ENCODE measurements at regions of chr6 and their contacts with region 1.

Region 1: DNA sequence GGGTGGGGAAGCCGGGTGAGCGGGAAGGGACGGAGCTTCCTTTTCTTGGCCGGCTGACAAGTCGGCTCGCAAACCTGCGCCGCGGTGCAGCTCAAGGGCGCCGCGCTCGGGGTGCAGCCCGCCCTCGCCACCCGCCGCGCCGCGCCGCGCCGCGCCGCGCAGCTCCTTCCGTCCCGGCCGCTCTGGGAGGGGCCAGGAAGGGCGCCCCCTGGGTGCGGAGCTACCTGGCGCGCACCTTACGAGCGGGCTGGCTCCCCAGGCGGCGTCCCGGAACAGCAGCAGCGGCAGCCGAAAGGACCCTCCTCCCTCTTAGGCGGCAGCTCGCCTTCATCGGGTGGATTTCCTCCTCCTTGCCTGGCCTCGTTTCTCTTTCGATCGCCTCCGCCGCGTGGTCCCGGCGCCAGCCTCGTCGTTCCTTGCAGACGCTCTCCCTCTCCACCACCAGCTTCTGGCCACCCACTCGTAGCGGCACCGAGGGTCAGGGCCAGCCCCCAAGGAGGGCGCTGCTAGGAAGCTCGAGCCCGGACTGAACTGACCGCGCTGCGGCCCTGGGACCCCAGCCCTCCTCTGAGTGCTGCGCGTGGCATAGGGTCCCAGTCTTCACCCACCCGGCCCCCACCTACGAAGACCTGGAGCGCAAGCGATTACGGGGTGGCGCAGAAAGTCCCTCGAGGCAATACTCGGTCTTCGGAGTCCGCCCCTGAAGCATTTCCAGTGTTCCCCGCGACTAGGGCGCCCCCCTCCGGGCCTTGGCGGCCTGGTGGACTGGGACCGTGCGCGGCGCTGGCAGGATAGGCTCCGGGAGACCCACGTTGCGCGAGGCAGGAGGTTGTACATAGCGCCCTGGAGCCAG is at the start of gene MAP3K5:
- DNase-seq: peak; percentile 94
- H3K4me3 Mint-ChIP-seq: peak within 1 kb of the TSS; percentile 87
- H3K27ac Mint-ChIP-seq: peak within 1 kb of the TSS; percentile 96
- H3K4me1 Mint-ChIP-seq: peaks cover 33% of the 10 kb centered on the region
- H3K27me3 Mint-ChIP-seq: peaks cover 2% of the 10 kb centered on the region
- total RNA-seq, gene MAP3K5: 23.4 to 24.0 TPM

Region 2: DNA sequence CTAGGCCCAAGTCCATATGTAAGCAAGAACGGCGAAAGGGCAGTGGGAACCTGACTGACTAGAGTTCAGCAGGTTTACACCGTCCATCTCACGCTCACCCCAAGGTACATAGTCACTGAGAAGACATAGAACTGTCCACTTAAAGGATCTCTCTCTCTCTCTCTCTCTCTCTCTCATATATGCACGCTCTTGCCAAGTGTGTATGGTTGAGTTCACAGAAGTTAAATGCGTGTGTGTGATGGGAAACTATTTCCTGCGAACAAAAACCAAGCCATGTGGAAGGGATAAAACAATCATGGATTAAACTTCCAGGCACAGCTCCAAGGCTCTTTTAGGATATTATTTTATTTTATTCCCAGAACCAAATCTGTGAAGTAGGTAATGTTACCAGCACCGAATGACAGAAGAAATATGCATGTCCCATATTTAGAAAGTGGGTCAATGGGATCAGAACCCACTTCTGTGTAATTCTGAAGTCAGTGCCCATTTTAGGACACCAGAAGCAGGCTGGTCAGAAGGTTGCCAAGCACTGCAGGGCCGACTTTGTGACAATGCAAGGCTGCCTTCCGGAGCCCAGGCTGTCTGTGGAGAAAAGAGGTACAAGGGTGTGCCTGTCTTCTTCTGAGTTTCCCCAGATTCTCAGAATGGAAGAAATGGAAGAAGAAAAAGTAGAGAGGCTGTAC is 193.2 kb before region 1 on chr6:
- CTCF ChIA-PET with region 1: interaction called, 15 read pairs
- POLR2A ChIA-PET with region 1: no interaction called
- DNase-seq: no peak
- H3K4me3 Mint-ChIP-seq: no peak overlapping the region
- H3K27ac Mint-ChIP-seq: no peak overlapping the region
- H3K4me1 Mint-ChIP-seq: peaks cover 7% of the 10 kb centered on the region
- H3K27me3 Mint-ChIP-seq: no peaks in the 10 kb centered on the region

Region 3: GRCh38 chr6:136618086-136618485 is 174.6 kb before region 1 on chr6:
- CTCF ChIA-PET with region 1: interaction called, 10 read pairs
- POLR2A ChIA-PET with region 1: no interaction called
- DNase-seq: no peak
- H3K4me3 Mint-ChIP-seq: no peak overlapping the region
- H3K27ac Mint-ChIP-seq: no peak overlapping the region
- H3K4me1 Mint-ChIP-seq: no peaks in the 10 kb centered on the region
- H3K27me3 Mint-ChIP-seq: no peaks in the 10 kb centered on the region

Region 4: GRCh38 chr6:136652656-136653055 is 140.0 kb before region 1 on chr6:
- CTCF ChIA-PET with region 1: interaction called, 218 read pairs
- POLR2A ChIA-PET with region 1: interaction called, 9 read pairs
- DNase-seq: no peak
- H3K4me3 Mint-ChIP-seq: no peak overlapping the region
- H3K27ac Mint-ChIP-seq: no peak overlapping the region
- H3K4me1 Mint-ChIP-seq: no peaks in the 10 kb centered on the region
- H3K27me3 Mint-ChIP-seq: no peaks in the 10 kb centered on the region

Region 5: GRCh38 chr6:136740050-136740974 is 52.3 kb before region 1 on chr6:
- CTCF ChIA-PET with region 1: interaction called, 10 read pairs
- POLR2A ChIA-PET with region 1: no interaction called
- DNase-seq: no peak
- H3K4me3 Mint-ChIP-seq: no peak overlapping the region
- H3K27ac Mint-ChIP-seq: no peak overlapping the region
- H3K4me1 Mint-ChIP-seq: peaks cover 30% of the 10 kb centered on the region
- H3K27me3 Mint-ChIP-seq: no peaks in the 10 kb centered on the region

Region 6: DNA sequence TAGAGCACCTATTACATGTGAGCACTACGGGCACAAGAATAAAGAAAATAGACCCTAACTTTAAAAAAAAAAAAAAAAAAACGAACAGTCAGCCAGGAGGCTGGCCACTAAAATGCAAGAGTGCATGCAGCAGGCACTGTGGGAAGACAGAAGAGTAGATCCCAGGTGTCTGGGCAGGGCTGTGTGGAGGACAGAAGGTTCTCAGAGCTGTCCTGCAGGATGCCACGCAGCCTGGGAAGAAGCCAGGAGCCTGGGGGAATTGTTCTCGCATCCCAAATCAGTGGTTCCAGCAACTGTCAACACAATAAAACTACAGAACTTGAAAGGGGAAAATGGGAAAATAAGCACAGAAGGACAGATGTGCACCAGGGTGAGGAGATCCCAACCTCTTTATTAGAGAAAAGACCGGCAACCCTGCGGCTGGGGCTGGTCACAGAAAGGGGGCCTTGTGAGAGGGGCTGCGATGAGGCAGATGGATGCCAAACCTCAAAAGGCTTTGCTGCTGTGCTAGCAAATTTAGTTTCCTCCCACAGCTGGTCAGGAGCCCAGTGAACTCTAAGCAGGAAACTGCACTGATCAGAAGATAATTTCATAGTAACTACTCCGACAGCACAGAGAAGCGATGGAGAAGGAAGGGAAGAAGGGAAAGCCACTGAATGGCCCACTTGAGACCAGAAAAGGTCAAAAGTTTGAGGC is 31.3 kb before region 1 on chr6:
- CTCF ChIA-PET with region 1: interaction called, 27 read pairs
- POLR2A ChIA-PET with region 1: interaction called, 4 read pairs
- DNase-seq: peak; percentile 35
- H3K4me3 Mint-ChIP-seq: peak overlapping the region; percentile 20
- H3K27ac Mint-ChIP-seq: peak overlapping the region; percentile 62
- H3K4me1 Mint-ChIP-seq: peaks cover 68% of the 10 kb centered on the region
- H3K27me3 Mint-ChIP-seq: no peaks in the 10 kb centered on the region

Region 7: GRCh38 chr6:136803608-136804007 is 11.0 kb after region 1 on chr6:
- CTCF ChIA-PET with region 1: interaction called, 21 read pairs
- POLR2A ChIA-PET with region 1: no interaction called
- DNase-seq: no peak
- H3K4me3 Mint-ChIP-seq: no peak overlapping the region
- H3K27ac Mint-ChIP-seq: no peak overlapping the region
- H3K4me1 Mint-ChIP-seq: no peaks in the 10 kb centered on the region
- H3K27me3 Mint-ChIP-seq: peaks cover 7% of the 10 kb centered on the region

Region 8: GRCh38 chr6:138654715-138655634 is 1862.3 kb after region 1 on chr6:
- CTCF ChIA-PET with region 1: no interaction called
- POLR2A ChIA-PET with region 1: no interaction called
- DNase-seq: no peak
- H3K4me3 Mint-ChIP-seq: peak overlapping the region; percentile 27
- H3K27ac Mint-ChIP-seq: no peak overlapping the region
- H3K4me1 Mint-ChIP-seq: peaks cover 14% of the 10 kb centered on the region
- H3K27me3 Mint-ChIP-seq: peaks cover 12% of the 10 kb centered on the region

Measured in activated CD4-positive, alpha-beta T cell treated with anti-CD3 and anti-CD28 coated beads, Interleukin-2, amount 10 ng/mL, durations not matched to agents 7 days and 5 days (primary cell).